ENCODE measurements at regions of chr4 and their contacts with region 1.

Region 1: DNA sequence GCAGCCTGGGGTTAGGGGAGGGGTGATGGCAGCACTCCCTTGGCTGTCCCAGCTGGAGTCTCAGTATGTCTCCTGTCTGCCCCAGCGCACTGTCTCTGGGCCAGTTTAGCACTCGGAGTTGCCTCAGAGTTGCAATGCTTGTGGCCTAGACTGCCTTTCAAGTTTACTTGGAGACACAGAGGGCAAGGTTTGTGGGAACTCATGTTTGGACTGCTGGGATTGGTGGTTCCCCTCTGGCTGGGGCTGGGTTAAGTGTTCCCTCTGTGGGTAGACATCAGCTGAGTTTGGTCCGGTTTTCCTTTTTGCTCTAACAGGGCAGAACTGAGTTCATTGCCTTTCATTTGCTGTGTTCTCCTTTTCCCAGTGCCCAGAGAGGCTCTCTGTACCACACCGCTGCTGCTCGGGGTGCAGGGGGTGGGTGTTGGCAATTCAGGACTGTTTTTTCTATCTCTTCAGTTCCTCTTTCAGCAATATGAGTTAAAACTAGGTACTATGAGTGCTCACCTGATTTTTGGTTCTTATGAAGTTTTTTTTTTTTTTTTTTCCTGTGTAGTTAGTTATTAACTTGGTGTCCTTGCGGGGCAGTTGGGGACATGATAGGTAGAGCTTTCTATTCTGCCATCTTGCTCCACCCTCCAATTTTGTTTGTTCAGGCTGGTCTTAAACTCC is 17.2 kb downstream of the RAB33B start:
- DNase-seq: no peak
- ATAC-seq: no peak
- H3K4me3 ChIP-seq: no peak overlapping the region
- H3K4me3 Mint-ChIP-seq: no peak overlapping the region
- H3K27ac ChIP-seq: no peak overlapping the region
- H3K27ac Mint-ChIP-seq: no peak overlapping the region
- H3K4me1 ChIP-seq: peaks cover 0 to 4% of the 10 kb centered on the region in 2 experiments
- H3K4me1 Mint-ChIP-seq: peaks cover 20 to 25% (median 21%) of the 10 kb centered on the region in 3 donors
- H3K27me3 ChIP-seq: no peaks in the 10 kb centered on the region
- H3K27me3 Mint-ChIP-seq: no peaks in the 10 kb centered on the region

Region 2: DNA sequence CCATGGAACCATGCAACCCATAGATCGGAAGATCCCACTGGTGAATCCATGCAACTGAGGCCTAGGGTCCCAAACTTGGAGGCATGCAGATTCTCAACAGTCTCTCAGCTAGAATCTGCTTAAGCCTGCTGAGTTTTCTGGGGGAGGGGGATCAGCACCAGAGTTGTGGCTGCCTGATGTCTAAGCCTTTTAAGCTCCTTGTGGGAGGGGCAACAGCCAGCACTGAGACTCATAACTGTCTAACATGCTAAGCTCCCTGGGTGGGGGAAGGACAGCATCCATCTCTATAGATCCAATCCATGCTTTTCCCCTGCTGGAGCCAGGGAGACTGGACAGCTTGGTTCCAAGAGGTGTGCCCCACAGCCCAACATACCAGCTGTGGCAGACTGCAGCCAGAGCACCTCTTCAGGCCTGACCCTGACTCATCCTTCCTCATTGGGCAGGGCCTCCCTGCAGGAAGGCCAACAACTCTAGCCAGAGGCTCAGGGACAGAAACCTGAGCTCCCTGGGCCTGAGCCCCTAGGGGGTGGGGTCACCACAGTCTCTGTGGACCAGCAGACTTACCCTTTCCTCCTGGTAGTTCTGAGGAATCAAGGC is 928.8 kb before region 1 on chr4:
- CTCF ChIA-PET with region 1: no interaction called
- POLR2A ChIA-PET with region 1: no interaction called
- DNase-seq: no peak
- ATAC-seq: no peak
- H3K4me3 ChIP-seq: no peak overlapping the region
- H3K4me3 Mint-ChIP-seq: no peak overlapping the region
- H3K27ac ChIP-seq: no peak overlapping the region
- H3K27ac Mint-ChIP-seq: no peak overlapping the region
- H3K4me1 ChIP-seq: no peaks in the 10 kb centered on the region
- H3K4me1 Mint-ChIP-seq: no peaks in the 10 kb centered on the region
- H3K27me3 ChIP-seq: no peaks in the 10 kb centered on the region
- H3K27me3 Mint-ChIP-seq: no peaks in the 10 kb centered on the region

Region 3: GRCh38 chr4:139553751-139554641 is 82.9 kb after region 1 on chr4:
- CTCF ChIA-PET with region 1: no interaction called
- POLR2A ChIA-PET with region 1: interaction called in 1 of 2 experiments, 10 read pairs
- DNase-seq: no peak
- ATAC-seq: no peak
- H3K4me3 ChIP-seq: no peak overlapping the region
- H3K4me3 Mint-ChIP-seq: peak overlapping the region; percentile 90 to 97 (median 90)
- H3K27ac ChIP-seq: peak overlapping the region; percentile 16
- H3K27ac Mint-ChIP-seq: peak overlapping the region; percentile 63 to 68
- H3K4me1 ChIP-seq: peaks cover 8 to 28% of the 10 kb centered on the region in 2 experiments
- H3K4me1 Mint-ChIP-seq: peaks cover 29 to 64% (median 48%) of the 10 kb centered on the region in 3 donors
- H3K27me3 ChIP-seq: peaks cover 0 to 17% of the 10 kb centered on the region in 2 experiments
- H3K27me3 Mint-ChIP-seq: peaks cover 0 to 2% of the 10 kb centered on the region in 2 donors